ENCODE measurements at regions of chr22 and their contacts with region 1.

Region 1: DNA sequence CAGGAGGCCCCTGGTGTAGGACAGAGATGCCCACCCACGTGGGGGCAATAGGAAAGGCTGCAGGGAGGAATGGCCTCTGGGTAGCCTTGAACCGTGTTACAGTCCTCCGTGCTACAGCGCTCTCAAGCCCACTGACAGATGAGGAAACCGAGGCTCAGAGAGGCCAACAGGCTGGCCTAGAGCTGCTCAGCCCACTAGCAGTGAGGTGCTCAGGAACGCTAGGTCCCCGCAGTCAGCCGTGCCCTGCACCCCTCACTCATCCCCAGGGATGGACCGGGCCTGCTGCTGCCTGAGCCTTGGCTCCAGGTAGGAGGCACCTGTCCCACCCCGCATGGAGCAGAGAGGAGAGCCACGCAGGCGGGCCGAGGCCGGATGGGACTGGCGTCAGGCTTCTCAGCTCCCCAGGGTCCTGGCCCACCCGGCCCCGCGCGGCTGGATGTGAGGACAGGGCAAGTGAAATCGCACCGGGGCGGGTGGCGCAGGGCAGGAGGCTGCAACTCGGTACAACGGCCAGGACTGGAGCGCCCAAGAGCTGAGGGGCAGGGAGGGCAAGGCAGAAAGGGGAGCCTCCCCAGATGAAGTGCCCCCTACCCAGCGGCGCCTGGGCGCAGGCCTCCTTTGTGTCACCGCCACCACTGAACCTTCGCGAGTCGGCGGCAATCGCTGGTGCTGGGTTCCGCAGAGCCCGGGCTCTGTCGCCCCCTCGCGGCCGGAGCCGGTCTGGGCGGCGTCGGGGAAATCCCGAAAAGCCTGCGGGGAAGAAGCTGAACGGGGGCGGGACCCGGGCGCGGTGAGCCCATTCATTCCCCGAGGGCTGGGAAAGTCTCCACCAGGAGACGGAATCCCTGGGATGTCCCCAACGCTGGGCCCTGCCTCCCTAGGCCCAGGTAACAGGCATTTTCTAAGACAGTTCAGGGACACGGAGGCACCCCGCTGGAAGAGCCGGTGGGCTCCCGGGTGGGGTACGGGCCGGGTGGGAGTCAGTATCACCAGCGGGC is 8.4 kb upstream of the SLC2A11 start:
- DNase-seq: peak; percentile 97
- ATAC-seq: peak; percentile 84
- H3K4me3 Mint-ChIP-seq: no peak overlapping the region
- H3K27ac Mint-ChIP-seq: no peak overlapping the region
- H3K4me1 Mint-ChIP-seq: peaks cover 37% of the 10 kb centered on the region
- H3K27me3 Mint-ChIP-seq: peaks cover 7% of the 10 kb centered on the region
- CTCF ChIP-seq: peak; percentile 92

Region 2: GRCh38 chr22:23591201-23591791 is 258.0 kb before region 1 on chr22:
- CTCF ChIA-PET with region 1: interaction called, 10 read pairs
- POLR2A ChIA-PET with region 1: no interaction called
- DNase-seq: peak; percentile 86
- ATAC-seq: peak; percentile 98
- H3K4me3 Mint-ChIP-seq: no peak overlapping the region
- H3K27ac Mint-ChIP-seq: no peak overlapping the region
- H3K4me1 Mint-ChIP-seq: peaks cover 16% of the 10 kb centered on the region
- H3K27me3 Mint-ChIP-seq: peaks cover 2% of the 10 kb centered on the region; the same call in 1 of the 2 replicates
- CTCF ChIP-seq: peak; percentile 94

Region 3: DNA sequence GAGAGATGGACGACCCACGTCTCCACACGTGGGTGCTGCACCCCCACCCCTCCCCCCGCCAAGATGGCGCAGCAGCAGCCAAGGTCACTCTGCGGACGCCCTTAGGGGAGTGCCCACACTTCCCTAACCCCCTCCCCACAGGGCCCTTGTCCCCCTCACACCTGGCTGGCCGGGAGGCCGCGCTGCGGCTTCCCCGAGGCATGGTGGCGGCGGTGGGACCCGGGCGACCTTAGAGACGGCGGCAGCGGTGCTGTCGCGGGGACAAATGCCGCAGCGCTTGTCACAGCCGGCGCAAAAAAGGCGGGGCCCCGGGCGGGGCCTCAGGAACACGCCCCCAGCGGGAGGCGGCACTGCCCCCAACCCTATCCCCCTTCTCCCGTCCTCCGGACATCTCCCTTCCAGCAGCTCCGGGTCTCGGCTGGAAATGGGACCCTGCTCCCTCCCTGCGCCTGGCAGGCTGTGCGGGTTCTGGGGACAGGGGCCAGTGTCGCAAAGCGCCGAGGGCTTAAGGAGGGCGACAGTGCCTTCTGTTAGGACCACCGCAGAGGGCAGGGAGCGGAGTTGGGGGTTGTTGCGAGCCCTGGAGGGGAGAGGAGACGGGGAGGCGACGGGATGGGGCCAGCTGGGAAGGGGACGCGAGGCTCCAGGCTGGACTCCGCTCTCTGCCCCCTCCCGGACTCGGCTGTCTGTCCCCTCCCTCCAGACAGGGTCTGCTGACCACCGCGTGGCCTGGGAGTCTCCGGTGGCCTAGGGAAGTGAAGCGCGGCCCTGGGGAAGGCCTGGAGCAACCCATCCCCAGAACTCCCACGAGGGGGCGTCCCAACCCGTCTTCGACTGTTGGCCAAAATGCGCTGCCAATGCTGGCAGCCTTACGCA is 81.4 kb before region 1 on chr22 and contains the start of gene CHCHD10:
- CTCF ChIA-PET with region 1: interaction called, 77 read pairs
- POLR2A ChIA-PET with region 1: interaction called, 8 read pairs
- DNase-seq: peak; percentile 90
- ATAC-seq: peak; percentile 41
- H3K4me3 Mint-ChIP-seq: peak within 1 kb of the TSS; percentile 89
- H3K27ac Mint-ChIP-seq: no peak within 1 kb of the TSS
- H3K4me1 Mint-ChIP-seq: peaks cover 36% of the 10 kb centered on the region
- H3K27me3 Mint-ChIP-seq: peaks cover 16% of the 10 kb centered on the region
- CTCF ChIP-seq: peak; percentile 81
- total RNA-seq, gene CHCHD10: 170 to 198 TPM (median 171 TPM) in 3 replicates

Region 4: GRCh38 chr22:23789638-23790037 is 59.7 kb before region 1 on chr22:
- CTCF ChIA-PET with region 1: interaction called, 17 read pairs
- POLR2A ChIA-PET with region 1: no interaction called
- DNase-seq: no peak
- ATAC-seq: 0 out of 2 replicates have a peak, but pooled peaks have one; percentile 7
- H3K4me3 Mint-ChIP-seq: no peak overlapping the region
- H3K27ac Mint-ChIP-seq: peak overlapping the region; percentile 61
- H3K4me1 Mint-ChIP-seq: peaks cover 30% of the 10 kb centered on the region
- H3K27me3 Mint-ChIP-seq: no peaks in the 10 kb centered on the region
- CTCF ChIP-seq: no peak

Region 5: GRCh38 chr22:23820748-23821211 is 28.5 kb before region 1 on chr22:
- CTCF ChIA-PET with region 1: interaction called, 15 read pairs
- POLR2A ChIA-PET with region 1: interaction called, 3 read pairs
- DNase-seq: no peak
- ATAC-seq: peak; percentile 53
- H3K4me3 Mint-ChIP-seq: no peak overlapping the region
- H3K27ac Mint-ChIP-seq: 0 out of 2 replicates have a peak overlapping the region, but pooled peaks have one; percentile 40
- H3K4me1 Mint-ChIP-seq: peaks cover 9% of the 10 kb centered on the region
- H3K27me3 Mint-ChIP-seq: no peaks in the 10 kb centered on the region; the same call in 1 of the 2 replicates
- CTCF ChIP-seq: no peak

Region 6: DNA sequence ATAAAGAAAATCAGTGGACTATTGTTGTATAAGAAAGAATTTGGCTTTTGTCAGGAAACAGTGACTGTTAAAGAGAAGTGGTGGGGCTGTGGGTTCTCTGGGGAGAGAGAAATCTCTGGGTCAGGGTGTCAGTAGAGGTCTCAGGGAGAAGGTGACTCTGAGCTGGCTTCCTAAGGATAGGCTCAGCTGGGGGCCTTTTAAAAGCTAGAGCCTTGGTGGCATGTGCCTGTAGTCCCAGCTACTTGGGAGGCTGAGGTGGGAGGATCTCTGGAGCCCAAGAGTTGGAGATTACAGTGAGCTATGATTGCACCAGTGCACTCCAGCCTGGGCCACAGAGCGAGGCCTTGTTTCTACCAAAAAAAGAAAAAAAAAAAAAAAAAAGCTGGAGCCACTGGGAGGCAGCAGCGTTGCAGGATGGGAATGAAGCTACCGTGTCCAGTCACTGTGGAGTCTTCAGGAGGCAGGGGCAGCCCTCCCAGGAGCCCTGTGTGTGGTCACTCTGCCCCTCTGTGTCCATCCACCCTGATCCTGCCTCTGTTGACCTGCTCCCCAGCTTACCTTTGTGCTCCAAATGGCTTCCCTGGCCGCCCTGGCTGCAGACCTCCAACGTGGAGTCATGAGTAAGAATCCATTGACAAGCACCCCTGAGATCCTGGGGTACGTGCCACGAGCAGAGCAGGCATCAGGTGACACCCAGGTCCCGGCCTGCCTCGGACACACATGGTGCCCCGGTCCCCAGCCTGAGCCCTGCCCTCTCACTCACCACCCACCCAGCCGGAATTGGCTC is 39.5 kb after region 1 on chr22:
- CTCF ChIA-PET with region 1: interaction called, 22 read pairs
- POLR2A ChIA-PET with region 1: interaction called, 7 read pairs
- DNase-seq: no peak
- ATAC-seq: peak; percentile 59
- H3K4me3 Mint-ChIP-seq: no peak overlapping the region
- H3K27ac Mint-ChIP-seq: no peak overlapping the region
- H3K4me1 Mint-ChIP-seq: peaks cover 22% of the 10 kb centered on the region
- H3K27me3 Mint-ChIP-seq: peaks cover 16% of the 10 kb centered on the region
- CTCF ChIP-seq: no peak

Region 7: GRCh38 chr22:23984430-23984829 is 135.1 kb after region 1 on chr22:
- CTCF ChIA-PET with region 1: no interaction called
- POLR2A ChIA-PET with region 1: no interaction called
- DNase-seq: peak; percentile 79
- ATAC-seq: peak; percentile 75
- H3K4me3 Mint-ChIP-seq: 0 out of 2 replicates have a peak overlapping the region, but pooled peaks have one; percentile 37
- H3K27ac Mint-ChIP-seq: peak overlapping the region; percentile 95
- H3K4me1 Mint-ChIP-seq: peaks cover 23% of the 10 kb centered on the region
- H3K27me3 Mint-ChIP-seq: peaks cover 6% of the 10 kb centered on the region
- CTCF ChIP-seq: peak; percentile 87

Measured in WTC11 (cell line).